Esophagus muscularis mucosa (tissue), 4 donors: ENCODE measurements at regions of chr2 and their contacts with region 1.

Region 1: DNA sequence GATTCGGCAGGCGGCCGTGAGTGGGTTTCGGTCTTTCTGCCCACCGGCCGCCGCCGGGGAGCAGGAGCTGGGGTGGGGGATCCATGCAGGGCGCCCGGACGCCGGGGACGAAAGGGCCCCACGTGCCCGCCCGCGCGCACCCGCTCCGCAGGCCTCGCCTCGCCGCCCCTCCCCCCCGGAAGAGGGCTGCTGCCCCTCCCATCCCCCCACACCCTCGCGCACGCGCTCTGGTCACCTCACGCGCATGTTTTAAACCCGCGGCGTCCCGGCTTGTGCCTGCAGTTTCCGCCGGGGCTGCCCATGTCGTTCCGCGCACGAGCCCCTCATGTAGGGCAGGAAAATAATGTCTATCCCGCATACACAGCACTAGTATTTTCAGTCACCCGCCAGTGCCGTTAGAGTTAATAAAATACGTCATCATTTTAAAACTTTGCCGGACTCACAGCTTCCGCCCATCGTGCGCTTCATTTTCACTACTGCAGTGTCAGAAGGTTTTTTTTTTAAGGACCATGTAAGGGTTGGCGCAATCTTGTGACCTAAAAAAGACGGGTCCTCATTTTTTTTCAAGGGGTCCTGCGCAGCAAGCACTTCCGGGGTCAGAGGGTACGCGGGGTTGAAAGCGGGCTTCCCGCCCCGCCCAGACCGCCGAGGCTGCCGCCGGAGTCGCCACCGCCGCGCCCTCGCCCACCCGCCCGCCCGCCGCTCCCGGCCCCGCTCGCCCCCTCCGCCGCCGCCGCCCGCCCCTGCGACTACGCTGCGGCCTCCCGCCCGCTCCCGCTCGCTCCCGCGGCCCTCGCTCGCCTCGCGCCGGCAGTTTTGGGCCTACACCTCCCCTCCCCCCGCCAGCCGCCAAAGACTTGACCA is at the start of gene PCBP1:
- DNase-seq: peak; percentile 98
- H3K4me3 ChIP-seq: peak within 1 kb of the TSS; percentile 74 to 90 (median 85)
- H3K27ac ChIP-seq: peak within 1 kb of the TSS; percentile 99 to 100 (median 100)
- H3K4me1 ChIP-seq: peaks cover 29 to 68% (median 59%) of the 10 kb centered on the region in 4 donors
- H3K27me3 ChIP-seq: no peaks in the 10 kb centered on the region
- CTCF ChIP-seq: no peak
- EP300 ChIP-seq: no peak
- POLR2A ChIP-seq: peak; percentile 96
- total RNA-seq, gene PCBP1: 156 to 220 (median 189) TPM

Region 2: DNA sequence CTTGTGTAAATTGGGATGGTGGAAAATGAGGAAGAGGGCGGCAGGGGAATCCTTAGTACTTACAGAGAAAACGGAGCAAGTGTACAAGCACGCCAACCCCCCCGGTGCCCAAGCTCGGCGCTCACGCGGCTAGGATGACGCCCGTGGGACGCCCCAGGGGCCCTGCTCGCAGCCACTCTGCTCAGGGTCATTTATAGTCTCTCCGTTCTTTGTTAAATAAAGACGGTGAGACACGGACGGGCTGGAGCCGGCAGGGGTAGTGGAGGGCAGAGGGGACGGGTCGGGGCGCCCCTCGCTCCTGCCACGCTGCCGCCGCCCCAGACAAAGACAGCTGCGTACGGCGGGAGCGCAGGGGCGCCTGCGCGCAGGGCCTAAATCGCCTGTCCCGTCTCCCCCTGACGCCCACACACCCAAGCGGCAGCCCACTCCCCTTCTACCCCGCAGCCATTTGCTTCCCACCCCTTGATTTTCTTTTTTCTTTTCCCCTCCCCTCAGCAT is 38.0 kb after region 1 on chr2:
- intact Hi-C with region 1: loop called (anchors 2 kb)
- DNase-seq: peak; percentile 94
- H3K4me3 ChIP-seq: peak overlapping the region; percentile 61 to 72 (median 64)
- H3K27ac ChIP-seq: peak overlapping the region; percentile 93 to 99 (median 98)
- H3K4me1 ChIP-seq: peaks cover 24 to 36% (median 31%) of the 10 kb centered on the region in 4 donors
- H3K27me3 ChIP-seq: no peaks in the 10 kb centered on the region
- CTCF ChIP-seq: no peak
- EP300 ChIP-seq: no peak
- POLR2A ChIP-seq: no peak

Region 3: DNA sequence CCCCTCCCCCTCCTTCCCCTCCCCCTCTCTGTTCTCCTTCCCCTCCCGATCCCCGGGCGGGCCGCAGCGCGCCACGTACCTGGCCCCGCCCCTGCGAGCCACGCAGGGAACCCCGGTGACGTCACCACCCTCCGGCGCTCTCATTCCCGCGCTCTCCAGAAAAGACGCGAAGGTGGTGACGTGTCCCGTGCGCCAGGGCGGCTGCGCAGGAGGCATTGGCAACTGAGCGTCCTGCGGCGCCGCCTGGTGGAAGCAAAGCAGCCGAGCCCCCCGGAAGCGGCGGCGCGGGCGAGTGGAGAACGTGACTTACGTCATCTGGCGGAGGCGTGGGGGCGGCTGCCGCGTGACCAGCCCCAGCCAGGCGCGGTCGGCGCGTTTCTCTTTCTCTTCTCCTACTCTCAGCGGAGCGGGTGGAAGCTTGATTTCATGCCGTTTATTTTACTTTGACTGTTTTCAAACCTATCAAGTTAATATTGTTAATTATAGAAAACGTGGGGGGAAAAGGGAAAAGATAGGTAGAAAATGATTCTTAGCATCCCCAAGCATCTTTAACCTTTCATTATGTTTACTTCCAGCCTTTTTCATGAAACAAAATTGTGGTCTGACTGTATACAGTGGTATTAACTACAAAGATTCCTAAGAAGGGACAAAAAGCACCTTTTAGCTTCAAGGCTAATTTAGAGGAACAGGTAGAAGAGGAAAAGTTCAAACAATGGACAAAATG is 55.7 kb after region 1 on chr2:
- intact Hi-C with region 1: loop called (anchors 1 kb)
- DNase-seq: peak; percentile 100
- H3K4me3 ChIP-seq: peak overlapping the region; percentile 76 to 91 (median 78)
- H3K27ac ChIP-seq: peak overlapping the region; percentile 98 to 99 (median 99)
- H3K4me1 ChIP-seq: peaks cover 21 to 26% (median 23%) of the 10 kb centered on the region in 4 donors
- H3K27me3 ChIP-seq: no peaks in the 10 kb centered on the region
- CTCF ChIP-seq: peak; percentile 95 to 99 (median 98)
- EP300 ChIP-seq: no peak
- POLR2A ChIP-seq: peak; percentile 82

Region 4: GRCh38 chr2:70201831-70202806 is 115.0 kb after region 1 on chr2:
- intact Hi-C with region 1: no loop called
- DNase-seq: peak; percentile 68
- H3K4me3 ChIP-seq: no peak overlapping the region
- H3K27ac ChIP-seq: no peak overlapping the region
- H3K4me1 ChIP-seq: no peaks in the 10 kb centered on the region
- H3K27me3 ChIP-seq: no peaks in the 10 kb centered on the region
- CTCF ChIP-seq: no peak
- EP300 ChIP-seq: no peak
- POLR2A ChIP-seq: no peak

Region 5: GRCh38 chr2:70746094-70746974 is 659.3 kb after region 1 on chr2:
- intact Hi-C with region 1: no loop called
- DNase-seq: no peak
- H3K4me3 ChIP-seq: no peak overlapping the region
- H3K27ac ChIP-seq: no peak overlapping the region
- H3K4me1 ChIP-seq: no peaks in the 10 kb centered on the region
- H3K27me3 ChIP-seq: peaks cover 0 to 10% (median 0%) of the 10 kb centered on the region in 4 donors
- CTCF ChIP-seq: no peak
- EP300 ChIP-seq: no peak
- POLR2A ChIP-seq: no peak